MCF 10A (cell line): ENCODE measurements at regions of chr1 and their contacts with region 1.

Region 1: GRCh38 chr1:116919802-116920201 is 10.1 kb downstream of the PTGFRN start:
- DNase-seq: peak; percentile 52
- H3K4me3 Mint-ChIP-seq: peak overlapping the region; percentile 36
- H3K27ac Mint-ChIP-seq: peak overlapping the region; percentile 86
- H3K4me1 Mint-ChIP-seq: peaks cover 37% of the 10 kb centered on the region
- H3K27me3 Mint-ChIP-seq: no peaks in the 10 kb centered on the region
- CTCF ChIP-seq: no peak

Region 2: DNA sequence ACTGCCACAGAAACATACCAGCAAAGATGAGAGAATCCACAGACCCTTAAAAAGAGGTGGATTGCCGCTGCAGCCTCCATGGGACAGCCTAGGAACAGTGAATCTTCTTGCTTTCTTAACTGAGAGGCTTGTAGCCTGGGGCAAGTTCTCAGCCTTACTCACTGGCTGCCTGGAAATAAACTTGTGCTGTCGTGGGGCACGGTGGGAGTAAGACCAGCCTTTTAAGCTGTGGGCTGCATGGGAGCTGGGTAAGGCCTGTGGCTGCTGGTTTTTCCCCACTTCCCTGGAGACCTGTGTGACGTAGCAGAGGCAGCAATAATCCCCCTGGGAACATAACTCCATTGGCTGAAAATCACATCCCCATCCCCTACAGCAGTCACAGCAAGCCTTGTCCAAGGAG is 134.8 kb before region 1 on chr1:
- CTCF ChIA-PET with region 1: no interaction called
- POLR2A ChIA-PET with region 1: no interaction called
- intact Hi-C with region 1: no loop called
- DNase-seq: peak; percentile 30
- H3K4me3 Mint-ChIP-seq: no peak overlapping the region
- H3K27ac Mint-ChIP-seq: no peak overlapping the region
- H3K4me1 Mint-ChIP-seq: no peaks in the 10 kb centered on the region
- H3K27me3 Mint-ChIP-seq: peaks cover 86% of the 10 kb centered on the region
- CTCF ChIP-seq: no peak

Region 3: DNA sequence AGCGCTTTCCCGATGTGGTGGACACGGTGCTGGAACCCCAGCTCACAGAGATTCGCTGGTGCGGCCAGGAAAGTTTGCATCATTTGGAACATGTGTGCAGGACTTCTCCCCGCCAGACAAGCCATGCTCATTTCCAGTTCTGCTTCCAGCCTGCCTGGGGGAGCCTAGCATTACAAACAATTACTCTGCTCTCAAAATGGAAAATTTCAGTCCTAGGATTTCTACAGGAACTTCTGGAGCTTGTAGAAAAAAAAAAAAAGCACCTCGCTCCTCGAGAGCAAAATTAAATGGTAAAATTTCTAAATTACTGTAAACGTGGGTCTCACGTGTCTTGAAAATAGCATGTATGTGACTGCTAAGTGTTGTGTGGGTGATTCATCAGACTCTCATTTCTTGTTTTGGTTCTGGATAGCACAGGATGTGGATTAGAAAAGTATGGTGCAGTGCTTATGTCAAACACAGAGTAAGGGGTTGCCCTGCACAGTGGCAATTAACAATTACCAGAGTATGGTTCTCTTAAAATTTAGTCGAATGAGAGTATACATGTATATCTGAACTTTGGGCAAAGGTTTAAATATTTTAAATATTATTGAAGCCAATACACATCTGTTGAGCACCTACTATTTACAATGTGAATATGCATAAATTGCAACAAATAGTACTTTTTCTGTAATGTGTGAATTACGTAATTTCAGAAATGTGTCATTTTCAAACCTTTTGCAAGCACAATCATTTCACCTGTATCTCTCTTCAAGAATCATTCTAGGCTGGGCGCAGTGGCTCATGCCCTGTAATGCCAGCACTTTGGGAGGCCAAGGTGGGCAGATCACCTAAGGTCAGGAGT is 71.9 kb before region 1 on chr1:
- CTCF ChIA-PET with region 1: no interaction called
- POLR2A ChIA-PET with region 1: no interaction called
- intact Hi-C with region 1: no loop called
- DNase-seq: no peak
- H3K4me3 Mint-ChIP-seq: no peak overlapping the region
- H3K27ac Mint-ChIP-seq: no peak overlapping the region
- H3K4me1 Mint-ChIP-seq: peaks cover 5% of the 10 kb centered on the region
- H3K27me3 Mint-ChIP-seq: no peaks in the 10 kb centered on the region
- CTCF ChIP-seq: no peak

Region 4: DNA sequence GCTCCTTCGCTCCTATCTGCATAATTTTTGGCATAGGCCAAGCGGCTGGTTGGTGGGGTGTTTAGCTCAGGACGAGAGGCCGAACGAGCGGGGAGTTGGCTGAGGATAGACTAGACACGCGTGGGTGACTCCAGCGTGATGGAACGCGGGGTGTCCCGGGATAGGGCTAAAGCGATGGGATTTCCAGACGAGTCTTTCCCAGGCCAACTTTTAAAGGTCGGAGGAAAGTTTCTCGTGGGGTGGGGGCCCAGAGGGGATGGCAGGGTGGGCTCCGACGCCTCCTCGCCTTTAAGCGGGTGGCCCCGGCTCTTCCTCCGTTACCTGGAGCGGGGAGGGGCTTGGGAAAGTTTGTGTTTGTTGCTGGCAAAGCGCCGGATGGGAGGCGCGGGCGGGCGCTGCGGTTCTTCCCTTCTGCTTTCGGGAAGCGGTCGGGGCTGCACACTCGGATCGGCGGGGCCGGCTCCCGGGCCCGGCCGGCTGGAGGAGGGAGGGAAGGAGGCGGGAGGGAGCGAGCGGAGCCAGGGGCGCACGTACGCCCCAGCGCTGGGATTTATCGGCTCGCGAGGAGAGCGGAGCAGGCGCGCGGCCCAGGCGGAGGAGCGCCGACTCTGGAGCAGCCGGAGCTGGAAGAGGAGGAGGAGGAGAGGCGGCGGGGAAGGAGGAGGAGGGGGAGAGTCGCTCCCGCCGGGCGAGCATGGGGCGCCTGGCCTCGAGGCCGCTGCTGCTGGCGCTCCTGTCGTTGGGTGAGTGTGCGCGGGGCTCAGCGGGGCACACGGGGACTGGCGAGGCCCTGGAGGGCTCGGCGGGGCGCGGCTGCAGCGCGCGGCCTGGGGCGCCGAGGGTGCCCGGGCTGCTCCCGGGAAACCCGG is 10.1 kb before region 1 on chr1 and contains the start of gene PTGFRN:
- CTCF ChIA-PET with region 1: no interaction called
- POLR2A ChIA-PET with region 1: interaction called, 22 read pairs
- intact Hi-C with region 1: no loop called
- DNase-seq: peak; percentile 74
- H3K4me3 Mint-ChIP-seq: no peak within 1 kb of the TSS
- H3K27ac Mint-ChIP-seq: peak within 1 kb of the TSS; percentile 85
- H3K4me1 Mint-ChIP-seq: peaks cover 10% of the 10 kb centered on the region
- H3K27me3 Mint-ChIP-seq: no peaks in the 10 kb centered on the region
- CTCF ChIP-seq: no peak
- total RNA-seq, gene PTGFRN: 45.2 and 61.0 TPM in 2 replicates